MCF 10A (cell line): ENCODE measurements at regions of chr5 and their contacts with region 1.

Region 1: GRCh38 chr5:81751009-81751835 is at the start of gene SSBP2:
- DNase-seq: peak; percentile 99
- H3K4me3 Mint-ChIP-seq: peak within 1 kb of the TSS; percentile 90
- H3K27ac Mint-ChIP-seq: peak within 1 kb of the TSS; percentile 89
- H3K4me1 Mint-ChIP-seq: peaks cover 51% of the 10 kb centered on the region
- H3K27me3 Mint-ChIP-seq: no peaks in the 10 kb centered on the region
- CTCF ChIP-seq: no peak
- total RNA-seq, gene SSBP2: 36.0 and 52.7 TPM in 2 replicates

Region 2: DNA sequence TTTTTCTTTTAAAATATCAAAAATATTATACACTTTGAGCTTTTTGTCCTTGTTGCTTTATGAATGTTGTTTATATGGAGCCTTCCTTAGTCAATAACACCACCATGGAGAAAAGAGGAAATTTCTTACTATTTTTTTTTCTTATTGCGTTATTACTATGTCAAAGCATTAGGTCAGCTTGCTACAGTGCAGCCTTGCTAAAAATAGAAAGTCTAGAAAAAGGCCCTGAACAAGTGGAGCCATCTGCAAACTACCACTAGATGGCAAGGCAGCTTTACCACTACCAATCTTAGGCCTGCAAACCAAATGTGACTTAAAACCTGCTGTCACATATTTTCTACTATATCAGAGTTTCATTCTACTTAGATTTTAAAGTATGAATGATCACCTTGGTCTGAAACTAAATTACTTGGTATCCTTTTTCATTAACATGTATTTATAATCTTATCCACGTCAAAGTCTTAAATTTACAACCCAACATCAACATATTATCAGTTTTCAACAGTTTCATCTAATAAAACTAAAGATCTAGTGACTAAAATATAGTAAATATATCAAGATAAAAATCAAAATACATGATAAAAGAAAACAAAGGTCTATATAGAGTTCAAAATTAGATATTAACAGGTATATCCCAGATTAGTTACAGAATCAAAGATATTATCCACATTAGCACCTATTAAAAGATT is 244.2 kb before region 1 on chr5:
- CTCF ChIA-PET with region 1: interaction called, 4 read pairs
- POLR2A ChIA-PET with region 1: interaction called, 5 read pairs
- intact Hi-C with region 1: loop called (anchors 1 kb)
- DNase-seq: peak; percentile 79
- H3K4me3 Mint-ChIP-seq: no peak overlapping the region
- H3K27ac Mint-ChIP-seq: no peak overlapping the region
- H3K4me1 Mint-ChIP-seq: no peaks in the 10 kb centered on the region
- H3K27me3 Mint-ChIP-seq: no peaks in the 10 kb centered on the region
- CTCF ChIP-seq: peak; percentile 73

Region 3: DNA sequence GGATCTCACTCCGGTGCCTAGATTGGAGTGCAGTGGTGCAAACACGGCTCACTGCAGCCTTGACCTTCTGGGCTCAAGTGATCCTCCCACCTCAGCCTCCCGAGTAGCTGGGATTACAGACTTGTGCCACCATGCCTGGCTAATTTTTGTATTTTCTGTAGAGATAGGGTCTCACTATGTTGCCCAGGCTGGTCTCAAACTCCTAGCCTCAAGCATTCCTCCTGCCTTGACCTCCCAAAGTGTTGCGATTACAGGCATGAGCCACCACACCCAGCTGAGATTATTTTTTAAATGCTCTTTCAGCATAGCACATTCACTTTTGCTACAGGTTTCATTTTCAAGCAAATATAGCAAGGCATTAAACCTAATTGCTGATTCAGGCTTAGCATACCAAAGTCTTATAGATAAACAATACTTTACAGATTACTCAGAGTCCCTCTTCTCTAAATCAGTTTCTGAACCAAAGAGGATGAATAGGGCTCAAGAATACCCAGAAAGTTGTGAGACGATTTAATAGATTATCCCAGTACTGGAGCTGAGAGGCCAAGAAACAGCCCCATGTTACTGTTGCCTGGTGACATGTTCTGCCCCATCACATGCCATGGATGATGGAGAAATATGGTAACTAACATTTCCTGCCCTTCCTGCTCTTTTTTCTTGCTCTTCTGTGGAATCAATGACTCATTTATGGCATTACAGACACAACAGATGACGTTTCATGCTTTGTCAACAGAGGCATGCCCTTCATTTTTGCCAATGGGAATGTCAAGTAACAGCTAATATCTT is 17.6 kb after region 1 on chr5:
- CTCF ChIA-PET with region 1: interaction called, 4 read pairs
- POLR2A ChIA-PET with region 1: interaction called, 18 read pairs
- intact Hi-C with region 1: no loop called
- DNase-seq: peak; percentile 68
- H3K4me3 Mint-ChIP-seq: no peak overlapping the region
- H3K27ac Mint-ChIP-seq: peak overlapping the region; percentile 93
- H3K4me1 Mint-ChIP-seq: peaks cover 19% of the 10 kb centered on the region
- H3K27me3 Mint-ChIP-seq: no peaks in the 10 kb centered on the region
- CTCF ChIP-seq: no peak

Region 4: GRCh38 chr5:81825237-81825636 is 74.0 kb after region 1 on chr5:
- CTCF ChIA-PET with region 1: interaction called, 4 read pairs
- POLR2A ChIA-PET with region 1: interaction called, 25 read pairs
- intact Hi-C with region 1: no loop called
- DNase-seq: peak; percentile 92
- H3K4me3 Mint-ChIP-seq: peak overlapping the region; percentile 19
- H3K27ac Mint-ChIP-seq: peak overlapping the region; percentile 69
- H3K4me1 Mint-ChIP-seq: peaks cover 17% of the 10 kb centered on the region
- H3K27me3 Mint-ChIP-seq: no peaks in the 10 kb centered on the region
- CTCF ChIP-seq: no peak

Region 5: GRCh38 chr5:81856948-81857928 is 106.0 kb after region 1 on chr5:
- CTCF ChIA-PET with region 1: interaction called, 23 read pairs
- POLR2A ChIA-PET with region 1: interaction called, 331 read pairs
- intact Hi-C with region 1: no loop called
- DNase-seq: peak; percentile 93
- H3K4me3 Mint-ChIP-seq: peak overlapping the region; percentile 65
- H3K27ac Mint-ChIP-seq: peak overlapping the region; percentile 96
- H3K4me1 Mint-ChIP-seq: peaks cover 34% of the 10 kb centered on the region
- H3K27me3 Mint-ChIP-seq: no peaks in the 10 kb centered on the region
- CTCF ChIP-seq: peak; percentile 5

Region 6: GRCh38 chr5:82147865-82148573 is 396.8 kb after region 1 on chr5:
- CTCF ChIA-PET with region 1: no interaction called
- POLR2A ChIA-PET with region 1: interaction called, 15 read pairs
- intact Hi-C with region 1: no loop called
- DNase-seq: peak; percentile 84
- H3K4me3 Mint-ChIP-seq: peak overlapping the region; percentile 4
- H3K27ac Mint-ChIP-seq: peak overlapping the region; percentile 93
- H3K4me1 Mint-ChIP-seq: peaks cover 47% of the 10 kb centered on the region
- H3K27me3 Mint-ChIP-seq: no peaks in the 10 kb centered on the region
- CTCF ChIP-seq: no peak